HEK293T (cell line): ENCODE measurements at regions of chr6 and their contacts with region 1.

Region 1: GRCh38 chr6:109382576-109383437 is 540 bp upstream of the CD164 start:
- DNase-seq: peak; percentile 89

Region 2: DNA sequence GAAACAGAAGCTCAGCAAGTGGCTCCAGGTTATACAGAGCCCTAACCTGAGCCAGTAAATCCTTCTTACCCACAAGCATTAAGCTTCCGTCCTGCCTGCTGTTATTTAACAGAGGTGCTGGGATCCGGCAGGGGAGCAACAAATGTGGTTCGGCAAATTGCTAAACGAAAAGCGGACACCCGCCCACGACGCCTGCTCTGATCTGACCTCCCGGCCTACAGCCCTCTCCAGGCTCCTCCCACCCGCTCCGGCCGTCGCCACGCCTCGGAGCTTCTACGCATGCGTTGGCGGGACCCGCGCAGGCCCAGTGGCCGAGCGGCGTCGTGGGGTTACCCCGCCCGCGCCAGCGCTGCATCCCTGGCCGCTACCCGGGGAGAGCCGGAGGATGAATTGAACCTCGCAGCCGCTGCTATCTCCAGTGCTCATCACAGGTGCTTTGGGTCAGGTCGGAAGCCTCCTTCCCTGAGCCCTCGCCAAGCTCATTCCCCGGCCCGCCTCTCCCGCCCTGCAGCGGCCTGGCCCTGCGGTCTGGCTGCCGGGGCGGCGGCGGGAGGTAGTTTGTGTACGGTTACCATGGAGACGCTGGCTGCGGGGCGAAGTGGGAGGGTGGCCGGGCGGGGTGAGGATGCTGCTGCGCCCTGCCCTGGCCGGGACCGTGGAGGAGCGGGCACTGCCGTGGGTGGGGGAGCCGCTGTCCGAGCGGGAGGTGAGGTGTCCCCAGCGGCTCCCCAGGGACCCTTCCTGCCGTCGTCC is 534.5 kb before region 1 on chr6 and contains the start of gene ARMC2:
- CTCF ChIA-PET with region 1: no interaction called
- POLR2A ChIA-PET with region 1: no interaction called
- DNase-seq: peak; percentile 98

Region 3: GRCh38 chr6:108921547-108922361 is 461.1 kb before region 1 on chr6:
- CTCF ChIA-PET with region 1: interaction called, 13 read pairs
- POLR2A ChIA-PET with region 1: no interaction called
- DNase-seq: no peak

Region 4: GRCh38 chr6:109187399-109188114 is 195.2 kb before region 1 on chr6:
- CTCF ChIA-PET with region 1: interaction called, 17 read pairs
- POLR2A ChIA-PET with region 1: interaction called, 18 read pairs
- DNase-seq: peak; percentile 48

Region 5: GRCh38 chr6:109322825-109323224 is 60.0 kb before region 1 on chr6:
- CTCF ChIA-PET with region 1: no interaction called
- POLR2A ChIA-PET with region 1: no interaction called
- DNase-seq: no peak

Region 6: GRCh38 chr6:109397020-109397419 is 14.2 kb after region 1 on chr6:
- CTCF ChIA-PET with region 1: interaction called, 7 read pairs
- POLR2A ChIA-PET with region 1: interaction called, 18 read pairs
- DNase-seq: peak; percentile 20

Region 7: GRCh38 chr6:109440331-109441068 is 57.7 kb after region 1 on chr6 and contains the starts of genes PPIL6 and SMPD2:
- CTCF ChIA-PET with region 1: interaction called, 4 read pairs
- POLR2A ChIA-PET with region 1: interaction called, 18 read pairs
- DNase-seq: peak; percentile 92